PC-9 (cell line): ENCODE measurements at regions of chr1 and their contacts with region 1.

Region 1: GRCh38 chr1:235617808-235618207 is 31.8 kb downstream of the GNG4 start:
- DNase-seq: no peak
- H3K4me3 ChIP-seq: no peak overlapping the region
- H3K27ac ChIP-seq: no peak overlapping the region
- H3K4me1 ChIP-seq: peaks cover 3% of the 10 kb centered on the region
- H3K27me3 ChIP-seq: no peaks in the 10 kb centered on the region
- CTCF ChIP-seq: no peak

Region 2: DNA sequence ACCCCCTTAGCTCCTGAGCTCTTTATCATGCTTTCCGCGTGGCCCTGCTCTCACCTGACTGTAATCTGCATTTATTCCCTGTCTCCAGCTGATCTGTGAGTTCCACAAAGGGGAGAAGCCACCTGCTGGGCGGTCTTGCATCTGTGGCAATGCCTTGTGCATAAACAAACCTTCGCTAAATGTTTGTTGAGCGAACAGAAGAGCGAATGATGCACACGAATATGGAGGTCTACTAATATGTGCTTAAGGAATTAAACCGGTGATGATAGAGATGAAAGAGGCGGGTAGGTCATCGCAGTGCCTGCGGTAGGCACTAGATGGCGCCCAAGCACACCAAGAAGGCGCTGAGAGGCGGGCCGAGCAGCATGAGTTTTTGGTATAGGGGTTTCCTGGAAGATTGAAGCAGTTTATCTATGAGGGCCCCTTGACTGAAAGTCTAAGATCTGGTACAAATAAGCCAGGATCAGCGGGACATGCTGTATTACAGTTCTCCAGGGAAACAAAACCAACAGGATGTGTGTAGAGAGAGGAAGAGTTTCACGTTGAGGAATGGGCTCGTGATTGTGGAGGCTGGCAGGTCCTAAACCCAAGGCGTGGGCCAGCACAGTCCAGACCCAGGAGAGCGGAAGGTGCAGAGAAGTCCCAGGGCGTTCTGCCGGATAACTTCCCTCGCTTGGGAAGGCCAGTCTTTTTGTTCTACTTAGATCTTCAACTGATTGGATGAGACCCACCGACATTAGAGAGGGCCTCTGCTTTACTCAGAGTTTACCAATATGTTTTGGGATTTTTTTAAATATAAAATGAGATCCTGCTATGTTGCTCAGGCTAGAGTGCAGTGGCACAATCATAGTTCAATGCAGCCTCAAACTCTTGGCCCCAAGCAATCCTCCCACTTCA is 523.9 kb before region 1 on chr1:
- CTCF ChIA-PET with region 1: no interaction called
- POLR2A ChIA-PET with region 1: no interaction called
- intact Hi-C with region 1: no loop called
- DNase-seq: peak; percentile 50 to 79
- H3K4me3 ChIP-seq: no peak overlapping the region
- H3K27ac ChIP-seq: no peak overlapping the region
- H3K4me1 ChIP-seq: no peaks in the 10 kb centered on the region
- H3K27me3 ChIP-seq: no peaks in the 10 kb centered on the region
- CTCF ChIP-seq: peak; percentile 88

Region 3: GRCh38 chr1:235136111-235136510 is 481.7 kb before region 1 on chr1:
- CTCF ChIA-PET with region 1: no interaction called
- POLR2A ChIA-PET with region 1: no interaction called
- intact Hi-C with region 1: no loop called
- DNase-seq: no peak
- H3K4me3 ChIP-seq: no peak overlapping the region
- H3K27ac ChIP-seq: no peak overlapping the region
- H3K4me1 ChIP-seq: no peaks in the 10 kb centered on the region
- H3K27me3 ChIP-seq: no peaks in the 10 kb centered on the region
- CTCF ChIP-seq: no peak

Region 4: DNA sequence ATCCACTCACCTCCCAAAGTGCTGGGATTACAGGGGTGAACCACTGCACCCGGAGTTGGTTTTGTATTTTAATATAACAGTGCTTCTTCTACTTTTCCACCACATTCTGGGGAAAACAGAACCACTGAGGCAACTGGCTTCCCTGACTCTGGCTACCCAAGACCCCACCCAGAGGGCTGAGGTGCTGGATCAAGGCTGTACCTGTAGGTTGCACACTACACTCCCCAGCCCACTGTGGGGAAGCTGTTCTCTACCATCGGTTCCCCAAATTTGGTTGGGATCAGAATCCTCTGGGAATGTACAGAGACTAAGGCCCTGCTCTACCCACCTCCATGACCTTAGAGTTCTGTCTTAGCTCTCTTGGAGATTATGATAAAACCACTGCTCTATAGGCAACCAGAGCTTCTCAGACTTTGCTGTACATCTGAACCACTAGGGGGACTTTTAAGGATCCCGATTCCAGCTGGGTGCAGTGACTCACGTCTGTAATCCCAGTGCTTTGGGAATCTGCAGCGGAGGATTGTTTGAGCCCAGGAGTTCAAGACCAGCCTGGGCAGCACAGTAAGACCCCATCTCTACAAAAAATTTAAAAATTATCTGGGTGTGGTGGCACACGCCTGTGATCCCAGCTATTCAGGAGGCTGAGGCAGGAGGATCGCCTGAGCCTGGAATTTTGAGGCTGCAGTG is 19.8 kb before region 1 on chr1:
- CTCF ChIA-PET with region 1: interaction called, 13 read pairs
- POLR2A ChIA-PET with region 1: no interaction called
- intact Hi-C with region 1: no loop called
- DNase-seq: peak; percentile 11 to 52
- H3K4me3 ChIP-seq: no peak overlapping the region
- H3K27ac ChIP-seq: no peak overlapping the region
- H3K4me1 ChIP-seq: no peaks in the 10 kb centered on the region
- H3K27me3 ChIP-seq: no peaks in the 10 kb centered on the region
- CTCF ChIP-seq: peak; percentile 60